ENCODE measurements at regions of chr10 and their contacts with region 1.

Region 1: DNA sequence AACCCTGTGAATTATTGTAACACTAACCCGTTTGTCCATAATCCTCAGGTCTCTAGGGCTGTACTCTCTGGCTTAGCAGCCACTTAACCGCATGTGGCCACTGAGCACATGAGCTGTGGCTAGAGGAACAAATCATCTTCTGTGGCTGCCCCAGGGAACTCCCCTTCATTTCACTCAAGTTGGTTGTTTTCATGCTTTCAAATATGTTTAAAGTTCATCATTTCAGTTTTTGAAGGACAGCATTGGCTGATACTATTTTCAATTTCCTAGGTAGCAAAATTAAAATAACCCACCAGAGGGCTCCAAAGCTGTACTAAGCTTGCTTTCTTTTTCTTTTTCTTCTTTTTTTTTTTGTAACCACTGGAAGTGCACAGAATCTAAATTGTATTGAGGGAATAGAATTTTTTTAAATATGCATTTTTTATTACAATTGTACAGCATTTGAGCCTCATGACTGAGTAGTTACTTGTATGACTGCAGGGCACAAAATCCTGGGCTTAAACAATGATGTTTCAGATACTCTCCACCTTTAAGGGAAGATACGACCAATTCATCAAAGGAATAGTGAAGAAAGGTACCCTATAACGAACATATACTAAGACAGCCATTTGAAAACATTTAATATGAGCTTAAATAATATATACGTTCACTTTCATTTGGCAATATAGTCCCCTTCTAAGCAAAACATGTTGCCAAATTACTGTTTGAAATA is 38.6 kb downstream of the MRC1 start:
- DNase-seq: peak in 1 of 2 experiments; percentile 23
- H3K4me3 ChIP-seq: no peak overlapping the region
- H3K4me3 Mint-ChIP-seq: no peak overlapping the region
- H3K27ac Mint-ChIP-seq: no peak overlapping the region
- H3K4me1 ChIP-seq: no peaks in the 10 kb centered on the region
- H3K4me1 Mint-ChIP-seq: no peaks in the 10 kb centered on the region
- H3K27me3 ChIP-seq: peaks cover 1% of the 10 kb centered on the region; the same call in 1 of the 2 replicates
- H3K27me3 Mint-ChIP-seq: peaks cover 18% of the 10 kb centered on the region
- CTCF ChIP-seq: peak; percentile 47 to 62

Region 2: GRCh38 chr10:17607603-17608332 is 240.0 kb before region 1 on chr10:
- CTCF ChIA-PET with region 1: no interaction called
- POLR2A ChIA-PET with region 1: no interaction called
- intact Hi-C with region 1: loop called (anchors 1 kb)
- DNase-seq: peak in 1 of 2 experiments; percentile 65
- H3K4me3 ChIP-seq: no peak overlapping the region
- H3K4me3 Mint-ChIP-seq: no peak overlapping the region
- H3K27ac Mint-ChIP-seq: no peak overlapping the region
- H3K4me1 ChIP-seq: no peaks in the 10 kb centered on the region
- H3K4me1 Mint-ChIP-seq: peaks cover 7% of the 10 kb centered on the region
- H3K27me3 ChIP-seq: no peaks in the 10 kb centered on the region
- H3K27me3 Mint-ChIP-seq: no peaks in the 10 kb centered on the region
- CTCF ChIP-seq: peak; percentile 88 to 89

Region 3: DNA sequence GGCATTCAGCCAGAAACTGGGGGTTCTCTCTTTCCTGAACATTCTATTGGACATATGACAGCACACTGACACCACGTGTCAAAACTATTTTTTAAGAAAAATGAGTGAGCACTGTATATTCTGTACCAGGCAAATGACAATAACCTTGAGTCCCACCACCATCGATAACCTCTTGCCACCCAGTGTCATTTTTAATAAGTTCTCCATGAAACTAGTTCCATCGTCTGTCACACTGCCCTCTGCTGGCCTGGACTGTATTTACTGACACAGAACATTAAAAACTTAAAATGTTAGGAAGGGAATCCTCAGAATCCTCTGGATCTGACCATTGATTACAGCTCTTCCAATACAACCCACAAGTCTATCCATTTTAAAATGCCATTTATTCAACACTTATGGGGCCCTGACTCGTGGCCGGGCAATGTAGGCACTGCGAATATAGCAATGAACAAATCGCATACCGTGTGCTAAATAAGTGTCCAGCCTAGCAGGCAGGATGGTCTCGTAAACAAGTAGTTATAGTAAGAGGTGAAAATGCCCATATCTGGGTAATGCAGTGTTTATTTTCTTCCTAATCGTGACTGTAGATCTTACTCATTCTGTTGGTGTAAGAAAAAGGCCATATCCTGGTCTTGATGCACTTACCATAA is 256.6 kb after region 1 on chr10:
- CTCF ChIA-PET with region 1: no interaction called
- POLR2A ChIA-PET with region 1: no interaction called
- intact Hi-C with region 1: loop called (anchors 1 kb)
- DNase-seq: peak; percentile 49 to 65
- H3K4me3 ChIP-seq: no peak overlapping the region
- H3K4me3 Mint-ChIP-seq: no peak overlapping the region
- H3K27ac Mint-ChIP-seq: no peak overlapping the region
- H3K4me1 ChIP-seq: no peaks in the 10 kb centered on the region
- H3K4me1 Mint-ChIP-seq: no peaks in the 10 kb centered on the region
- H3K27me3 ChIP-seq: no peaks in the 10 kb centered on the region
- H3K27me3 Mint-ChIP-seq: peaks cover 14% of the 10 kb centered on the region
- CTCF ChIP-seq: peak; percentile 86 to 90

Region 4: DNA sequence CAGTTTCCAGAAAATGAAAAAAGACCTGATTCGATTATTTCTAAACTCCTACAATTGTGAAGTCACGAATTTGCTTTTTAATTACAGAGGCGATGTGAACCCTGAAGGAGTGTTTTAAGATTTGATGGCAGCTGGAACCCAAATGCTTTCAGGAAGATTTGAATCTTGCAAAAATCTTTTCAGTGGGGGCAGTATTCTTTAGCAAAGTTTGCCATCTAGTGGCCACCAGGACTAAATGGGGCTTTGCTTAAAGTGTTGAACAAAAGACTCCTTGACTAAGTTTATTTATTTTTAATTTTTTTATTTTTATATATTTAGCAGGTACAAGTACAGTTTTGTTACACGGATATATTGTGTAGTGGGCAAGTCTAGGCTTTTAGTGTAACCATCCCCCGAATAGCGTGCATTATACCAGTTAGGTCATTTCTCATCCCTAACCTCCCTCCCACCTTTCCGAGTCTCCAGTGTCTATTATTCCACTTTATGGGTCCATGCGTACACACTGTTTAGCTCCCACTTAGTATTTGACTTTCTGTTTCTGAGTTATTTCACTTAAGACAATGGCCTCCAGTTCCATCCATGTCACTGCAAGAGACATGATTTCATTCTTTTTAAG is 391.2 kb after region 1 on chr10:
- CTCF ChIA-PET with region 1: no interaction called
- POLR2A ChIA-PET with region 1: no interaction called
- intact Hi-C with region 1: loop called (anchors 2 kb)
- DNase-seq: peak in 1 of 2 experiments; percentile 28
- H3K4me3 ChIP-seq: no peak overlapping the region
- H3K4me3 Mint-ChIP-seq: no peak overlapping the region
- H3K27ac Mint-ChIP-seq: no peak overlapping the region
- H3K4me1 ChIP-seq: no peaks in the 10 kb centered on the region
- H3K4me1 Mint-ChIP-seq: no peaks in the 10 kb centered on the region
- H3K27me3 ChIP-seq: no peaks in the 10 kb centered on the region
- H3K27me3 Mint-ChIP-seq: peaks cover 19% of the 10 kb centered on the region
- CTCF ChIP-seq: peak; percentile 74 to 80

Region 5: DNA sequence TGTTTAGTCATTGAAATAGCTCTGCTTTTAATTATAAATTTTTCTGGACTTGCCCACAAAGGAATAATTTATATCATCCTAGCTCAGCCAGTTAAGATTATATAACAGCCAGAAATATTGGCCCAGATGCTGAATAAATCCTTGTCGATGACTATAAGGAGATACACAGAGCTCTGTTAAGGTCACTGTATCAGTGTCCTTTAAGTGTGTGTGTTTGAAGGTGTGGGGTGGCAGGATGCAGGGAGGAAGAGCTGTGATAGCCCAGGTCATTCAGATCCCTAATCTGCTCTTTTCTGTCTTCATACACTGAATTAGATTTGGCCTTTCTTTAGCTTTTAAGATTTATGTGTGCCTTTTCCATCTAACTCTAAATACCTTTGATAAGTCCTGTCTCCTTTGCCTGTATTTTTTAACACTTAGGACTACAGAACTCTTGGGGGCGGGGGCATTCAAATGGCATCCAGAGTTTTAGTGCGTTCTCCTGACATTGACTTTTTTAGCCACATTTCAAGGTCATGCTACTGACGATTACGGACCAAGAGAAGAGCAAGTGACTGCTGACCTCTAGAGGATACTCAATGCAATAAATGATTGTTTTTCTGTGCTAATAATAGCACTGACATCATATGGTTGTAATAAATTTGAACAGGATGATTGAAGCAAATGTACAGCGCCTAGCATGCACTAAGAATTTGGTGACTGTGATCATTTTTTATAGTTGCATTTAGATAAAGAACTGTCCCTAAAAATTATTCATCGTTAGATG is 464.8 kb after region 1 on chr10:
- CTCF ChIA-PET with region 1: no interaction called
- POLR2A ChIA-PET with region 1: no interaction called
- intact Hi-C with region 1: loop called (anchors 1 kb)
- DNase-seq: peak in 1 of 2 experiments; percentile 29
- H3K4me3 ChIP-seq: no peak overlapping the region
- H3K4me3 Mint-ChIP-seq: no peak overlapping the region
- H3K27ac Mint-ChIP-seq: no peak overlapping the region
- H3K4me1 ChIP-seq: no peaks in the 10 kb centered on the region
- H3K4me1 Mint-ChIP-seq: no peaks in the 10 kb centered on the region
- H3K27me3 ChIP-seq: peaks cover 2% of the 10 kb centered on the region
- H3K27me3 Mint-ChIP-seq: peaks cover 15% of the 10 kb centered on the region
- CTCF ChIP-seq: peak; percentile 46 to 71

Region 6: DNA sequence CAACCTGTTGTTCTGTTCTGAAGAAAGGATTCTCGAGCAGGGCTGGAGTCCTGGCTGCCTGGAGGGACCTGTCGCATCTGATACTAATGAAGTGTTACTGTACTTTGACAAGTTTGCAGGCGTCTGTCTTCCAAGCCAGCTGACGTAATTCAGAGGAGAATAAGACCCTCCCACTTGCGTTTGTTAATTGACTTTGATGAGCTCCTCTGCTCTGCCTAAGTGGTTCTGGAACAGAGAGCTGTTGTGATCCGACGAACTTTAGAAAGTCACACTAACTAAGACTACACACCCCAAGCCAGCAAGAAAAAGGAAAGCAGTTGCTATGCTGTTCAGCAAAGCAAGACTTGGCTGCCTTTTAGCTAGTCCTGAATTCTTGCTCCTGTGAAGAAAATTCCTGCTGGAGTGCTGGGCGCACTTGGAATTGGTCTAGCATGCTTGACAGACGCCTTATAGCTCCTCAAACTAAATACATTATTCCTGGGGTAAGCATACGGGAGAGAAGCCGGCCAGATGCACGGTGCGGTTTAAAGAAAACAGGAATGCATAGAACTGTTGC is 492.8 kb after region 1 on chr10:
- CTCF ChIA-PET with region 1: no interaction called
- POLR2A ChIA-PET with region 1: no interaction called
- intact Hi-C with region 1: no loop called
- DNase-seq: no peak
- H3K4me3 ChIP-seq: no peak overlapping the region
- H3K4me3 Mint-ChIP-seq: peak overlapping the region; percentile 32
- H3K27ac Mint-ChIP-seq: no peak overlapping the region
- H3K4me1 ChIP-seq: no peaks in the 10 kb centered on the region
- H3K4me1 Mint-ChIP-seq: peaks cover 6% of the 10 kb centered on the region
- H3K27me3 ChIP-seq: no peaks in the 10 kb centered on the region
- H3K27me3 Mint-ChIP-seq: peaks cover 10% of the 10 kb centered on the region
- CTCF ChIP-seq: no peak